Caco-2 (cell line): ENCODE measurements at regions of chrX and their contacts with region 1.

Region 1: DNA sequence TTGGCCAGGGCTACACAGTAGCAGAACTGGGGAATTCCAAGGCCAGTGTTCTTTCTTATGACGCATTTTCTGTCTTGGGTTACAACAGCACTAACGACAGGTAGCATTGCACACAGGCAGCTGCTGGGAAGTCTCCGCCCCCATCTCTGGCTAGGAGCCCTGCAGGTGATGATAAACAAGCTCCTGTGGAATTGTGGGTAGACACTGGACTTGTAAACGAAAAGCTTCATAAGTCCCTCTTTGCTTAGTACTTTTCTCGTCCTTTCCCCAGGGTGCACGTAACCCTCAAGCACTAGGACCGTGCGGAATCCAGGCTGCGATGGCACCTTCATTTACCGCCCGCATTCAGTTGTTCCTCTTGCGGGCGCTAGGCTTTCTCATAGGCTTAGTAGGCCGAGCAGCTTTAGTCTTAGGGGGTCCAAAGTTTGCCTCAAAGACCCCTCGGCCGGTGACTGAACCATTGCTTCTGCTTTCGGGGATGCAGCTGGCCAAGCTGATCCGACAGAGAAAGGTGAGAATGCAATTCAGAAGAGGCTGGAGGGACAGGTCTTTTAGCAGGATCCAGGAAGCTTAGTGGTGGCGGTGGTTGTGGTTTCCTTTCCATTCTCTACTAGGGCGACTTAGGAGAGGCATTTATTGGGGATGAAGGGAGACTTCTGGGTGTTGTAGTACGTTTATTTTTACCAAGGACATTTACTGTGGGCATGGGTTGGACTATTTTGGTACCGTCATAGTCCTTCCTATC is at the start of gene FAAH2:
- DNase-seq: peak; percentile 80 to 86
- H3K4me3 ChIP-seq: peak within 1 kb of the TSS; percentile 55
- H3K4me3 Mint-ChIP-seq: peak within 1 kb of the TSS; percentile 87
- H3K27ac Mint-ChIP-seq: peak within 1 kb of the TSS; percentile 94
- H3K4me1 ChIP-seq: no peaks in the 10 kb centered on the region
- H3K4me1 Mint-ChIP-seq: peaks cover 9% of the 10 kb centered on the region
- H3K27me3 ChIP-seq: no peaks in the 10 kb centered on the region
- H3K27me3 Mint-ChIP-seq: no peaks in the 10 kb centered on the region
- CTCF ChIP-seq: peak in 1 of 2 experiments; percentile 16
- total RNA-seq, gene FAAH2: 7.7 and 7.8 TPM in 2 replicates

Region 2: GRCh38 chrX:56729152-56729850 is 557.4 kb before region 1 on chrX and contains the start of gene NBDY:
- CTCF ChIA-PET with region 1: no interaction called
- POLR2A ChIA-PET with region 1: no interaction called
- intact Hi-C with region 1: no loop called
- DNase-seq: peak in 1 of 2 experiments; percentile 25
- H3K4me3 ChIP-seq: peak within 1 kb of the TSS; percentile 65
- H3K4me3 Mint-ChIP-seq: peak within 1 kb of the TSS; percentile 81
- H3K27ac Mint-ChIP-seq: peak within 1 kb of the TSS; percentile 45
- H3K4me1 ChIP-seq: no peaks in the 10 kb centered on the region
- H3K4me1 Mint-ChIP-seq: no peaks in the 10 kb centered on the region
- H3K27me3 ChIP-seq: no peaks in the 10 kb centered on the region
- H3K27me3 Mint-ChIP-seq: peaks cover 2% of the 10 kb centered on the region
- CTCF ChIP-seq: no peak
- total RNA-seq, gene NBDY: 27.9 and 29.4 TPM in 2 replicates

Region 3: DNA sequence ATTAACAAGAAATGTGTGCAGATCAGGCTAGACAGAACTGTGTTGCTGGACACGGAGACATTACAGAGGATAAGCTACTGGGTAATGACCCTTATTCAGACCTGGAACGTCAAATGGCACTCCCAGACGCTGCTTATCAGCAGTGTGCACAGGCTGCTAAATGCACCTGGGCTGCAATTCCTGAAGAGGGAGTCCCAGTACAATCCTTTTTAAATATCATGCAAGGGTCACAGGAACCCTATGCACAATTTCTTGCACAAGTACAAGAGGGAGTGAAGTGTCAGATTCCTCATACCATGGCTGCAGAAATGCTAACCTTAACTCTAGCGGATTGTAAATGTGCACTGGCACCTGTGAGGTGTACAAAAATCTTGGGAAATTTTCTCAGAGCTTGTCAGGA is 182.3 kb before region 1 on chrX:
- CTCF ChIA-PET with region 1: no interaction called
- POLR2A ChIA-PET with region 1: no interaction called
- intact Hi-C with region 1: loop called (anchors 5 kb)
- DNase-seq: peak in 1 of 2 experiments; percentile 10
- H3K4me3 ChIP-seq: no peak overlapping the region
- H3K4me3 Mint-ChIP-seq: no peak overlapping the region
- H3K27ac Mint-ChIP-seq: no peak overlapping the region
- H3K4me1 ChIP-seq: no peaks in the 10 kb centered on the region
- H3K4me1 Mint-ChIP-seq: no peaks in the 10 kb centered on the region
- H3K27me3 ChIP-seq: no peaks in the 10 kb centered on the region
- H3K27me3 Mint-ChIP-seq: no peaks in the 10 kb centered on the region
- CTCF ChIP-seq: peak in 1 of 2 experiments; percentile 35

Region 4: DNA sequence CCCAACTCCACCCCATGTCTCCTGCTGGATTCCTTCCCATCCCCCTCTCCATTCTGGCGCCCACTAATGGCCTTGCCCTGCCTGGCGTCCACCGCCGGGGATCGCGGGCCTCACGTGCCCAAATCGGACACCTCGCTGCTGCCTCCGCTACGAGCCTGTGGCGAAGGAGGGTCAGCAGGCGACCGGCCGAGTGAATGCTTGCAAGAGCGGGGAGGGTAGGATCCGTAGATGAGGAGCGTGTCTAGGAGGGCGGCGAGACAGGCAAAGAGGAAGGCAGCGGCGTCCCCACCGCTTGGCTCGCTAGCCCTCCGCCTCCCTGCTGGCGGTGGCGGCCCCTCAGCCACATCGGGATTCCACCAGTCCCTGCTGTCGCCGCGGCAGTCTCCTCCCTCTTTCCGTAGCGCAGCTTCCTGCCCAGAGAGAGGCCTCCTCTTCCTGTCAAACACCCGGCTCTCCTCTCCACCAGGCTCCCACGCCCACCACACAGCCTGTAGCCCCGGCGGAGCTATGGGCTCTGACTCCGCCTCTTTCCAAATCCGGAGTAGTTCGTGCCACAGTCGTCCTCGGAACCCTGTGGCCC is 165.4 kb before region 1 on chrX and contains the start of gene SPIN2B:
- CTCF ChIA-PET with region 1: no interaction called
- POLR2A ChIA-PET with region 1: no interaction called
- intact Hi-C with region 1: loop called (anchors 10 kb)
- DNase-seq: peak; percentile 85 to 90
- H3K4me3 ChIP-seq: peak within 1 kb of the TSS; percentile 84
- H3K4me3 Mint-ChIP-seq: peak within 1 kb of the TSS; percentile 97
- H3K27ac Mint-ChIP-seq: peak within 1 kb of the TSS; percentile 95
- H3K4me1 ChIP-seq: no peaks in the 10 kb centered on the region
- H3K4me1 Mint-ChIP-seq: peaks cover 8% of the 10 kb centered on the region
- H3K27me3 ChIP-seq: no peaks in the 10 kb centered on the region
- H3K27me3 Mint-ChIP-seq: no peaks in the 10 kb centered on the region
- CTCF ChIP-seq: peak in 1 of 2 experiments; percentile 11
- total RNA-seq, gene SPIN2B: 14.2 and 14.3 TPM in 2 replicates

Region 5: DNA sequence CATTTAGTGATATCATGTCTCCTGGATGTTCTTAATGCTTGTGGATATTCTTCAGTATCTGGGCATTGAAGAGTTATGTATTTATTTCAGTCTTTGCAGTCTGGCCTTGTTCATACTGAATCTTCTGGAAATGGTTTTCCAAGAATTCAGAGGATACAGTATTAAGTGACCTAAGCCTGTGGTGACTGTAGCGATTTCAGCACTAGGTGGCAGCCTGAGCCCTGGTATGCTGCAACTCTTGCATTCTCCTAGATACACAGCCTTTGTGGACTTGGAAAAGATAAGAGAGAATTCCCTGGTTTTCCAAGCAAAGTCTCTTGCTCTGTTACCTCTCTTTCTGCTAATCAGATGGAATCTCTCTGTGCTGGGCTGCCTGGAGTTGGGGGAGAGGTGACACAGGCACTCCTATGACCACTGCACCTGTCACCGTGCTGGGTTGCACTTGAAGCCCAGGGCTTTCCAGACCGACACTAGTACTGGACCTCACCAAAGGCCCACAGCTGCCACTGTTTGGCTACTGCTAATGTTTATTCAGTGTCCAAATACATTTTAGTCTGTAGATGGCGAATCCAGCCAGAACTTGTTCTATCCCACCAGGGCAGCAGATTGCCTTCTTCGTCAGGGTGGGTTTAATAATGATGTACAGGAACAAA is 130.2 kb before region 1 on chrX:
- CTCF ChIA-PET with region 1: no interaction called
- POLR2A ChIA-PET with region 1: no interaction called
- intact Hi-C with region 1: loop called (anchors 2 kb)
- DNase-seq: peak; percentile 46 to 54
- H3K4me3 ChIP-seq: no peak overlapping the region
- H3K4me3 Mint-ChIP-seq: no peak overlapping the region
- H3K27ac Mint-ChIP-seq: no peak overlapping the region
- H3K4me1 ChIP-seq: no peaks in the 10 kb centered on the region
- H3K4me1 Mint-ChIP-seq: peaks cover 11% of the 10 kb centered on the region
- H3K27me3 ChIP-seq: no peaks in the 10 kb centered on the region
- H3K27me3 Mint-ChIP-seq: no peaks in the 10 kb centered on the region
- CTCF ChIP-seq: peak; percentile 43 to 61

Region 6: GRCh38 chrX:57329008-57329407 is 42.3 kb after region 1 on chrX:
- CTCF ChIA-PET with region 1: no interaction called
- POLR2A ChIA-PET with region 1: no interaction called
- intact Hi-C with region 1: loop called (anchors 2 kb)
- DNase-seq: no peak
- H3K4me3 ChIP-seq: no peak overlapping the region
- H3K4me3 Mint-ChIP-seq: no peak overlapping the region
- H3K27ac Mint-ChIP-seq: no peak overlapping the region
- H3K4me1 ChIP-seq: no peaks in the 10 kb centered on the region
- H3K4me1 Mint-ChIP-seq: no peaks in the 10 kb centered on the region
- H3K27me3 ChIP-seq: no peaks in the 10 kb centered on the region
- H3K27me3 Mint-ChIP-seq: no peaks in the 10 kb centered on the region
- CTCF ChIP-seq: no peak

Region 7: GRCh38 chrX:57367649-57368048 is 81.0 kb after region 1 on chrX:
- CTCF ChIA-PET with region 1: no interaction called
- POLR2A ChIA-PET with region 1: no interaction called
- intact Hi-C with region 1: no loop called
- DNase-seq: no peak
- H3K4me3 ChIP-seq: no peak overlapping the region
- H3K4me3 Mint-ChIP-seq: no peak overlapping the region
- H3K27ac Mint-ChIP-seq: no peak overlapping the region
- H3K4me1 ChIP-seq: no peaks in the 10 kb centered on the region
- H3K4me1 Mint-ChIP-seq: no peaks in the 10 kb centered on the region
- H3K27me3 ChIP-seq: no peaks in the 10 kb centered on the region
- H3K27me3 Mint-ChIP-seq: no peaks in the 10 kb centered on the region
- CTCF ChIP-seq: no peak

Region 8: GRCh38 chrX:57453901-57454300 is 167.2 kb after region 1 on chrX:
- CTCF ChIA-PET with region 1: no interaction called
- POLR2A ChIA-PET with region 1: no interaction called
- intact Hi-C with region 1: loop called (anchors 1 kb)
- DNase-seq: peak in 1 of 2 experiments; percentile 5
- H3K4me3 ChIP-seq: no peak overlapping the region
- H3K4me3 Mint-ChIP-seq: no peak overlapping the region
- H3K27ac Mint-ChIP-seq: no peak overlapping the region
- H3K4me1 ChIP-seq: no peaks in the 10 kb centered on the region
- H3K4me1 Mint-ChIP-seq: no peaks in the 10 kb centered on the region
- H3K27me3 ChIP-seq: no peaks in the 10 kb centered on the region
- H3K27me3 Mint-ChIP-seq: no peaks in the 10 kb centered on the region
- CTCF ChIP-seq: peak in 1 of 2 experiments; percentile 18